T-cell (primary cell): ENCODE measurements at regions of chr16 and their contacts with region 1.

Region 1: GRCh38 chr16:24890746-24891145 is 45.0 kb downstream of the SLC5A11 start:
- DNase-seq: no peak
- ATAC-seq: no peak
- H3K4me3 ChIP-seq: no peak overlapping the region
- H3K4me3 Mint-ChIP-seq: no peak overlapping the region
- H3K27ac ChIP-seq: no peak overlapping the region
- H3K27ac Mint-ChIP-seq: no peak overlapping the region
- H3K4me1 ChIP-seq: no peaks in the 10 kb centered on the region
- H3K4me1 Mint-ChIP-seq: no peaks in the 10 kb centered on the region
- H3K27me3 ChIP-seq: peaks cover 0 to 10% of the 10 kb centered on the region in 2 experiments
- H3K27me3 Mint-ChIP-seq: peaks cover 8 to 15% of the 10 kb centered on the region in 2 donors

Region 2: DNA sequence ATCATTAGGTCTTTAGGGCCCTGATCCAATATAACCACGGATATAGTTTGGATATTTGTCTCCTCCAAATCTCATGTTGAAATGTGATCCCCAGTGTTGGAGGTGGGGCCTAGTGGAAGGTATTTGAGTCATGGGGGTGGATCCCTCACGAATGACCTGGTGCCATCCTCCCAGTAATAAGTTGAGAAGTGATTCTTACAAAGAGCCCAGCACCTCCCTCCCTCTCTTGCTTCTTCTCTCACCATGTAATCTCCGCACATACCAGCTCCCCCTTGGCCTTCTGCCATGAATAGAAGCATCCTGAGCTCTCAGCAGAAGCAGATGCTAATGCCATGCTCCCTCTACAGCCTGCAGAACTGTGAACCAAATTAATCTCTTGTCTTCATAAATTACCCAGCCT is 393.3 kb before region 1 on chr16:
- CTCF ChIA-PET with region 1: interaction called in 1 of 2 experiments, 12 read pairs
- POLR2A ChIA-PET with region 1: no interaction called
- DNase-seq: no peak
- ATAC-seq: no peak
- H3K4me3 ChIP-seq: no peak overlapping the region
- H3K4me3 Mint-ChIP-seq: no peak overlapping the region
- H3K27ac ChIP-seq: no peak overlapping the region
- H3K27ac Mint-ChIP-seq: no peak overlapping the region
- H3K4me1 ChIP-seq: no peaks in the 10 kb centered on the region
- H3K4me1 Mint-ChIP-seq: no peaks in the 10 kb centered on the region
- H3K27me3 ChIP-seq: peaks cover 0 to 27% of the 10 kb centered on the region in 2 experiments
- H3K27me3 Mint-ChIP-seq: peaks cover 16 to 17% of the 10 kb centered on the region in 2 donors

Region 3: GRCh38 chr16:24844101-24845030 is 46.4 kb before region 1 on chr16:
- CTCF ChIA-PET with region 1: no interaction called
- POLR2A ChIA-PET with region 1: no interaction called
- DNase-seq: no peak
- ATAC-seq: no peak
- H3K4me3 ChIP-seq: no peak overlapping the region
- H3K4me3 Mint-ChIP-seq: no peak overlapping the region
- H3K27ac ChIP-seq: no peak overlapping the region
- H3K27ac Mint-ChIP-seq: no peak overlapping the region
- H3K4me1 ChIP-seq: no peaks in the 10 kb centered on the region
- H3K4me1 Mint-ChIP-seq: no peaks in the 10 kb centered on the region
- H3K27me3 ChIP-seq: peaks cover 0 to 7% of the 10 kb centered on the region in 2 experiments
- H3K27me3 Mint-ChIP-seq: no peaks in the 10 kb centered on the region

Region 4: DNA sequence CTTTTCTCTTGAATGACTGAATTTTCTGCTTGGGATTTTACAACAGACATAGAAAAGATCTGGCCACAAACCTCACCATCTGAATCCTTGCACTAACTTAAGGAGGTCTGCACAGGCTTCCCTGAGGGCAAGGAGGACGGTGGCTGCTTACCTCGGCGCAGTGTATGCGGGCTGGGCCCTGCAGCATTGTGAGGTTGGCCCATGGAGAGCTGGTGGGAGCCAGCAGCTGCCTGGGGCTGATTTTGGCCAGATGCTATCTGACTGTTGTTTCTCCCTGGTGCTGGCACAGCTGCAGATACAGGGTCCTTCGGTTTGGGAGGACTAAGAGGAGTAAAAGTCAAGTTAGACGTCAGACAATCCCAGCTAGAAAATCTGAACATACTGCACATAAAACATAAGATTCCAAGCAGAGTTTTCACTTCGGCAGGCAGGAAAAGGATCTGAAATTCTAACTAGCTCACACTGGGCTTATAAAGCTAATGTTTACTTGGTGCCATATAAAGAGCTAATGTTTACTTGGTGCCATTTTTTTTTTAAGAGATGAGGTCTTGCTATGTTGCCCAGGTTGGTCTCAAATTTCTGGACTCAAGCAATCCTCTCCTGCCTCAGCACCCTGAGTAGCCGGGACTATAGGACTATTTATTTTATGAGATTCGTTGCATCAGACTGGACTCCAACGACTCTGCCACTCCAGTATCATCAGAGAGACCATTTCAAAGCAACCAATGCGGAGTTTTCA is 44.7 kb after region 1 on chr16:
- CTCF ChIA-PET with region 1: no interaction called
- POLR2A ChIA-PET with region 1: no interaction called
- DNase-seq: no peak
- ATAC-seq: no peak
- H3K4me3 ChIP-seq: no peak overlapping the region
- H3K4me3 Mint-ChIP-seq: no peak overlapping the region
- H3K27ac ChIP-seq: no peak overlapping the region
- H3K27ac Mint-ChIP-seq: no peak overlapping the region
- H3K4me1 ChIP-seq: no peaks in the 10 kb centered on the region
- H3K4me1 Mint-ChIP-seq: no peaks in the 10 kb centered on the region
- H3K27me3 ChIP-seq: no peaks in the 10 kb centered on the region
- H3K27me3 Mint-ChIP-seq: no peaks in the 10 kb centered on the region